Ascending aorta (tissue), 2 donors: ENCODE measurements at regions of chr10 and their contacts with region 1.

Region 1: GRCh38 chr10:43863859-43864591 is 215.3 kb upstream of the ZNF32 start:
- DNase-seq: peak in 1 of 2 donors; percentile 85
- H3K4me3 ChIP-seq: no peak overlapping the region
- H3K27ac ChIP-seq: peak overlapping the region; percentile 77 to 89
- H3K4me1 ChIP-seq: peaks cover 0 to 25% of the 10 kb centered on the region in 2 donors
- H3K27me3 ChIP-seq: no peaks in the 10 kb centered on the region
- CTCF ChIP-seq: no peak

Region 2: GRCh38 chr10:43816351-43817321 is 47.4 kb before region 1 on chr10:
- intact Hi-C with region 1: loop called (anchors 2 kb)
- DNase-seq: no peak
- H3K4me3 ChIP-seq: no peak overlapping the region
- H3K27ac ChIP-seq: peak overlapping the region; percentile 35 to 63
- H3K4me1 ChIP-seq: peaks cover 9 to 33% of the 10 kb centered on the region in 2 donors
- H3K27me3 ChIP-seq: no peaks in the 10 kb centered on the region
- CTCF ChIP-seq: no peak

Region 3: DNA sequence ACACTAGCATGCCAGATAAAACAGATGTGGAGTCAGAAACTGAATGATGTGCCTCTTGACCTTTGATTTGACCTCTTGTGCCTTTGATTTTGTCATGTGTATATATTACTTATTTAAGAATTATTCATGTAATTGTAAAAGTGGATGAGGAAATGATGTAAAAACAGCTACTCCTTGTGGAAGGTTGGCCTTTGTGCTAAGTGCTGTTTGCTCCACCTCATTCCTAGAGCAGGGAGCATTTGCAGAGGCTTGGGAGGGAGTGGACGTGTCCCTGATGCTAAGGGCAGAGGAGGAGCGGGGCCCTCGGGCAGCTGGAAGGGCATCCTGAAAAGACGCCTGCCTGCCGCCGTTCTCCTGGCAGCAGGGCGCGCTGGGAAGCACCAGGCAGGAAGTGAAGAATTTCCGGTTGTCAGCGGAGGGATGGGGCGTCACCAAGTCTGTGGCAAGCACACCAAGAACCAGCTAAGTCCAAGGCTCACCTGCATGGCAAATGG is 17.8 kb before region 1 on chr10:
- intact Hi-C with region 1: loop called (anchors 2 kb)
- DNase-seq: peak in 1 of 2 donors; percentile 80
- H3K4me3 ChIP-seq: no peak overlapping the region
- H3K27ac ChIP-seq: peak overlapping the region; percentile 60 to 74
- H3K4me1 ChIP-seq: peaks cover 3 to 38% of the 10 kb centered on the region in 2 donors
- H3K27me3 ChIP-seq: no peaks in the 10 kb centered on the region
- CTCF ChIP-seq: no peak

Region 4: GRCh38 chr10:43905512-43906236 is 41.6 kb after region 1 on chr10:
- intact Hi-C with region 1: loop called (anchors 2 kb)
- DNase-seq: no peak
- H3K4me3 ChIP-seq: peak overlapping the region in 1 of 2 donors; percentile 19
- H3K27ac ChIP-seq: peak overlapping the region; percentile 40 to 65
- H3K4me1 ChIP-seq: peaks cover 5 to 30% of the 10 kb centered on the region in 2 donors
- H3K27me3 ChIP-seq: no peaks in the 10 kb centered on the region
- CTCF ChIP-seq: no peak

Region 5: DNA sequence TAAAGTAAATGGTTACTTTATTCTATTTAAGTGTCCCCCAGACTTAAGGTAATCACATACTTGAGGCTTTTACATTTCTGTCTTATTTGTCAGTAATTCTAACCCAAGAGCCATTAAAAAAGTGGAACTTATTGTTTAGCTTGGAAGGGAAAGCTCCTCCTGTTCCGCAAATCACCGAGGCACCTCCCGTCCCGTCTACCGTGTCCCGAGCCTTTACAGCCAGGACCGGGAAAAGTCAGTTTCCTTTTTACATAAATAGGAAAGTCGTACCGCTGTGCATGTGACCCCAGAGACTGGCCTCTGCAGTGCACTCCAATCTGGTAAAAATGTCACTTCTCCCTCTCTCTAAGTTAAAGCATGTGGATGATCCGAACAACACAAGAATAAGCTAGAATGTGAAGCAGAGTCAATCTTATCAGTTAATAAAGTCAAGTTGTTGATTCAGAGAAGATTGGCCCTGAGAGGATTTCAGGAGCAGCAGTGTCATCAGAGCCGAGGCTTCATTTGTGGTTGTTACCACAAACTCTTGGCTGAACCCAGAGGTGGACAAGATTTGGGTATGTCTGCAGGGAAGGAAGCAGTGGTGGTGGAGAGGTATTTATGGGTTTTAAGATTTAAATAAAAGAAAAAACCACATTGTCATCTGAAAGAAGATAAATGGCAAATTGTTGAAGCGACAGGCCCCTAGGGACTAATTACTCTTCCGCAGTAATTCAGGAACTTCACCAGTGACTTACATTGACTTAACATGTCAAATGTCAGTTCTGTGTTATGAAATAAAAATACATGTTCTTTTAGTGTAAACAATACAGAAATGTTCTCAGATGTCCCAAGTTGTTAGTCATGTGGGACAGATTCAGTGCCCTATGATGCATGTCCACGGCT is 101.2 kb after region 1 on chr10:
- intact Hi-C with region 1: loop called (anchors 10 kb)
- DNase-seq: peak in 1 of 2 donors; percentile 72
- H3K4me3 ChIP-seq: no peak overlapping the region
- H3K27ac ChIP-seq: peak overlapping the region; percentile 65 to 68
- H3K4me1 ChIP-seq: peaks cover 6 to 44% of the 10 kb centered on the region in 2 donors
- H3K27me3 ChIP-seq: no peaks in the 10 kb centered on the region
- CTCF ChIP-seq: no peak